GM12878 (cell line): ENCODE measurements at regions of chr2 and their contacts with region 1.

Region 1: GRCh38 chr2:218334531-218334930 is 22.1 kb upstream of the CATIP start:
- DNase-seq: no peak
- ATAC-seq: no peak
- H3K4me3 ChIP-seq: no peak overlapping the region
- H3K27ac ChIP-seq: peak overlapping the region; percentile 29; the same call in 1 of the 2 replicates
- H3K4me1 ChIP-seq: peaks cover 35% of the 10 kb centered on the region
- H3K27me3 ChIP-seq: no peaks in the 10 kb centered on the region
- CTCF ChIP-seq: no peak
- EP300 ChIP-seq: no peak
- POLR2A ChIP-seq: no peak
- RAD21 ChIP-seq: no peak

Region 2: DNA sequence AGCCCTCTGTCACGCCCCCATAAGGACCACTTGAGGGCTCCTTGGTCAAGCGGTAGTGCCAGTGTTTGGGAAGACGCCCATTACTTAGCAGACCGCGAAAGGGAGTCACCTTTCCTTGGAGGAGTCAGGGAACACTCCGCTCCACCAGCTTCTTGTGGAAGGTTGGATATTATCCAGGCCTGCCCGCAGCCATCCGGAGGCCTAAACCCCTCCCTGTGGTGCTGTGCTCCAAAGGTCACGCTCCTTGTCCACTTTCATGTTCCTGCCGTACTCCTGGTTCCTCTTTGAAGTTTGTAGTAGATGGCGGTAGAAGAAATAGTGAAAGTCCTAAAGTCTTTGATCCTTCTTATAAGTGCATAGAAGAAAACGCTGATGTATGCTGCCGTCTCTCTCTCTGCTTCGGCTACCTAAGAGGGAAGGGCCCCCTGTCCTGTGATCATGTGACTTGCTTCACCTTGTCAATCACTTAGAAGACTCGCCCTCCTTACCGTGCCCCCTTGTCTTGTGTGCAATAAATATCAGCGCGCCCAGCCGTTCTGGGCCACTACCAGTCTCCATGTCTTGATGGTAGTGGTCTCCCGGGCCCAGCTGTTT is 20.4 kb after region 1 on chr2:
- CTCF ChIA-PET with region 1: interaction called, 14 read pairs
- POLR2A ChIA-PET with region 1: interaction called, 10 read pairs
- RAD21 ChIA-PET with region 1: interaction called, 16 read pairs
- SMC1A ChIA-PET with region 1: interaction called, 12 read pairs
- in situ Hi-C with region 1: no loop called
- intact Hi-C with region 1: no loop called
- DNase-seq: no peak
- ATAC-seq: no peak
- H3K4me3 ChIP-seq: no peak overlapping the region
- H3K27ac ChIP-seq: no peak overlapping the region
- H3K4me1 ChIP-seq: no peaks in the 10 kb centered on the region
- H3K27me3 ChIP-seq: no peaks in the 10 kb centered on the region
- CTCF ChIP-seq: no peak
- EP300 ChIP-seq: no peak
- POLR2A ChIP-seq: no peak
- RAD21 ChIP-seq: no peak